ENCODE measurements at regions of chr20 and their contacts with region 1.

Region 1: DNA sequence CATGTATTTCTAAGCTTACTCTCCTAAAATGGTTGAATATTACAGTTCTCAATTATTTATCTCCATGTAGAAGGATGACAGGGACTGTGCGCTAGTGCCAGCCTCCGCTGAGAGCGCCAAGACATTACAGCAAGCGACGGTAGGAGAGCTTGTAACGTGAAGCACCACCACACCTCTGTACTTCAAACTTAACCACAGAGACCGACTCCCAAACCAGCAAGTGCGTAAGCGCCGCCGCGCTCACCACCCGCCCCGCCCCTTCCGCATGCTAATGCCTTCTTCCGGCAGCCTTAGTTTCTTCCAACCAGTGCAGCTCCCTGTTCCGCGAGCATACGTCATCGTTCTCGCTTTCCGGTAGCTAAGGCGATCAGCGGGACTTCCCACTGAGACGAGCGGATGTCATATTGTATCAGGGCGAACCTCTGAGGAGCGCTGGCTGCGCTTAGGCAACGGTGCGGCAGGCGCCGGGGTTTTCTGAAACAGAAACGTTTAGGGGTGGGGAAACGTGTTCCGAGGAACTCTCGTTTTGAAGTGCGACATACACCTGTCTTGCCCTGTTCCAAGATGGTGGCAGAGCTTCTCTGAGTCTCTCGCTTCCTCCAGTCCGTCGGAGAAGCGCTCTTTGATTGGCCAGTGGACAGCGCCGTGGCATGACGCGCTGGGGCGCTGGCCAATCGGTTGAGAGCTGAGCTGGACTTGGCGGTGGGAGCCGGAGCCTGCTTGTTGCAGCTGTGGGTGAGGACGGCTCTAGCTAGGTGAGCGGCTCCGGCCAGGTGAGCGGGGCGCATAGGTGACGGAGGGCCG is at the start of gene SEC23B:
- DNase-seq: peak; percentile 98
- H3K4me3 ChIP-seq: peak within 1 kb of the TSS; percentile 65 to 94 (median 75)
- H3K27ac ChIP-seq: peak within 1 kb of the TSS; percentile 82
- H3K4me1 ChIP-seq: peaks cover 9% of the 10 kb centered on the region
- H3K27me3 ChIP-seq: peaks cover 0 to 5% of the 10 kb centered on the region in 2 experiments
- CTCF ChIP-seq: no peak
- POLR2A ChIP-seq: peak; percentile 87
- total RNA-seq, gene SEC23B: 38.0 and 42.5 TPM in 2 replicates

Region 2: GRCh38 chr20:18412221-18412901 is 95.1 kb before region 1 on chr20:
- CTCF ChIA-PET with region 1: interaction called, 3 read pairs
- POLR2A ChIA-PET with region 1: no interaction called
- dilution Hi-C with region 1: no loop called
- intact Hi-C with region 1: loop called (anchors 2 kb)
- DNase-seq: no peak
- H3K4me3 ChIP-seq: no peak overlapping the region
- H3K27ac ChIP-seq: no peak overlapping the region
- H3K4me1 ChIP-seq: no peaks in the 10 kb centered on the region
- H3K27me3 ChIP-seq: no peaks in the 10 kb centered on the region
- CTCF ChIP-seq: no peak
- POLR2A ChIP-seq: no peak

Region 3: DNA sequence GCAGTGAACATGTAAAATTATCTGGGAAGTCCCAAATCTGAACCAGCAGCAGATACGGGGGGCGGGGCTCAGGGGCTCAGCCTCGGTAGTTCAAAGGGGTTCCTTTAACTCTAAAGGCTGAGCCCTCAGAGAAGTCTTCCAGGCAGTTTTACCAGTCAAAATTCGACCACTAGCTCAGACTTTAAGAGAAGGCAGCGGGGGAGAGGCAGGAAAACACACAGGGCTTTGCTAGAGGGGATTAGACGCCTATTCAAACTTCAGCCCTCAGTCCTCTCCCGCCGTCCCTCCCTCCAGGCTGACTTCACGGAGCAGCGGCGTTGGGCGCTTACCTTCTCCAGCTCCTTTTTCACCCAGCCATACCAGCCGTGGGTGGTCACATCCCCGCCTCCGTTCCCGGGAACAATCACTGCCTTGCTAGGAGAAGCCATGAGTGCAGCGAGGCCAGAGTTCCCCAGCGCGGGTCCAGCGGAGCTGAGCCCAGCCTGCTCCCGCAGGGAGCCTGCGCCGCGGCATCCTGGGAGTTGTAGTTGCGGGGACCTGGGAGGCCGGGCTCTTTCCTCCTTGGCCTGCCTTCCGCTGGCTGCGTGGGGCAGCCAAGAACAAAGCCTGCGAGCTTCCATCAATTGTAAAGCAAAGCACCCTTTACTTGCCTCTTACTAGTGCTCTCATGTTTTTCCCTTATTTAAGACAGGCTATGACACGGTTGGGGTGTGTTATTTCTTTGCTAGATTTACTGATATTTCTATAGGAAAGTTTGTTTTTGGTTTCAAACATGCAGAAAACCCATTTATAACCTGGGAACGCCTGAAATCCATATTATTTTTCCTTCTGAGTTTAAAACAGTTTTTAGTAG is 10.5 kb before region 1 on chr20 and contains the start of gene RBBP9:
- CTCF ChIA-PET with region 1: interaction called, 6 read pairs
- POLR2A ChIA-PET with region 1: interaction called, 13 read pairs
- dilution Hi-C with region 1: no loop called
- intact Hi-C with region 1: loop called (anchors 1 kb)
- DNase-seq: peak; percentile 85
- H3K4me3 ChIP-seq: peak within 1 kb of the TSS; percentile 52 to 86 (median 77)
- H3K27ac ChIP-seq: no peak within 1 kb of the TSS
- H3K4me1 ChIP-seq: peaks cover 10% of the 10 kb centered on the region
- H3K27me3 ChIP-seq: no peaks in the 10 kb centered on the region
- CTCF ChIP-seq: no peak
- POLR2A ChIP-seq: peak; percentile 63
- total RNA-seq, gene RBBP9: 17.0 and 17.2 TPM in 2 replicates

Region 4: GRCh38 chr20:18566892-18567742 is 59.7 kb after region 1 on chr20 and contains the start of gene SMIM26:
- CTCF ChIA-PET with region 1: interaction called, 3 read pairs
- POLR2A ChIA-PET with region 1: no interaction called
- dilution Hi-C with region 1: no loop called
- intact Hi-C with region 1: loop called (anchors 1 kb)
- DNase-seq: peak; percentile 81
- H3K4me3 ChIP-seq: peak within 1 kb of the TSS; percentile 68 to 86 (median 72)
- H3K27ac ChIP-seq: peak within 1 kb of the TSS; percentile 22
- H3K4me1 ChIP-seq: peaks cover 10% of the 10 kb centered on the region
- H3K27me3 ChIP-seq: no peaks in the 10 kb centered on the region
- CTCF ChIP-seq: no peak
- POLR2A ChIP-seq: peak; percentile 91
- total RNA-seq, gene SMIM26: 54.1 and 62.4 TPM in 2 replicates

Measured in endothelial cell of umbilical vein (primary cell).